ENCODE measurements at regions of chr9 and their contacts with region 1.

Region 1: DNA sequence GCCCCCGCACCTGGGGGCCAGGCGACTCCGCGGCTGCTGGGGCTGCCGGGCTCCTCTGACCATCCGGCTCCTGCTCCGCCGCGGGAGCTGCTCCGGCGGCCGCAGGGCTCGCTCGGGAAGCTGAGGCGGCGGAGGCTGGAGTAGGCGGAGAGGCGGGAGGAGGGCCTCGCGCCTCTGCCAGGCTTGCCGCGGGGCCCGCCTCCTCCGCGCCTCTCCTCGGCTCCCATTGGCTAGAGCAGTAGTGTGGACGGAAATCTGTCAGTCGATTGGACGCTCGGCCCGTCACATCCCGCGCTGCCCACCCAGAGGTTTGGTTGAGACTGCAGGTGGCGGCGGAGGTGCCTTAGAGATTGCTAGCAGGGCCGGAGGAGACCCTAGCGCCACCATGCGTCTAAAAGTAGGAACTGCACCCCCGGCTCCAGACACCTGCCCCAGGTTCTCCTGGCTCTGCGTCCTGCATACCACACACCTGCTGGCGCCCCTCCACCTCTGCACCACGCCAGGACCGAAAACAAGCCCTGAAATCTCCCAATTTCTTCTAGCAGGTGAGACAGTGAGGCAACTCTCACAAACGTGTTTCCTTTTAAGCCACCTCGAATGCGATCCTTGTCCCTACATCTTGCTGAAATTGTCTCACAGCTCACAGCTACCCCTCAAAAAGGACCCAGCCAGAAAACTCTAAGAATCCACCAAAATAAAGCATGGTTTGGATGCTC is at the start of gene SCAI:
- DNase-seq: peak; percentile 98 to 100 (median 100)
- H3K4me3 ChIP-seq: peak within 1 kb of the TSS; percentile 13 to 87 (median 66)
- H3K27ac ChIP-seq: peak within 1 kb of the TSS in 3 of 5 donors; percentile 41 to 80 (median 55)
- H3K4me1 ChIP-seq: peaks cover 0 to 22% of the 10 kb centered on the region in 2 donors
- H3K27me3 ChIP-seq: no peaks in the 10 kb centered on the region
- CTCF ChIP-seq: peak; percentile 98 to 100 (median 99)
- POLR2A ChIP-seq: peak; percentile 45 to 82
- total RNA-seq, gene SCAI: 7.8 to 19.6 (median 10.6) TPM

Region 2: GRCh38 chr9:124551472-124552272 is 591.9 kb before region 1 on chr9:
- intact Hi-C with region 1: no loop called
- DNase-seq: peak in 6 of 7 donors; percentile 49 to 73 (median 66)
- H3K4me3 ChIP-seq: no peak overlapping the region
- H3K27ac ChIP-seq: no peak overlapping the region
- H3K4me1 ChIP-seq: no peaks in the 10 kb centered on the region
- H3K27me3 ChIP-seq: no peaks in the 10 kb centered on the region
- CTCF ChIP-seq: peak; percentile 45 to 65 (median 59)
- POLR2A ChIP-seq: no peak

Region 3: GRCh38 chr9:124771021-124771866 is 372.3 kb before region 1 on chr9 and contains the start of gene NR6A1:
- intact Hi-C with region 1: no loop called
- DNase-seq: peak; percentile 97 to 98 (median 98)
- H3K4me3 ChIP-seq: peak within 1 kb of the TSS in 3 of 4 donors; percentile 13 to 81 (median 71)
- H3K27ac ChIP-seq: peak within 1 kb of the TSS in 4 of 5 donors; percentile 50 to 75 (median 67)
- H3K4me1 ChIP-seq: peaks cover 5 to 12% of the 10 kb centered on the region in 2 donors
- H3K27me3 ChIP-seq: peaks cover 24% of the 10 kb centered on the region
- CTCF ChIP-seq: peak in 3 of 6 experiments; percentile 18 to 30 (median 22)
- POLR2A ChIP-seq: peak in 1 of 2 donors; percentile 31
- total RNA-seq, gene NR6A1: 0.83 to 9.8 (median 1.6) TPM

Region 4: DNA sequence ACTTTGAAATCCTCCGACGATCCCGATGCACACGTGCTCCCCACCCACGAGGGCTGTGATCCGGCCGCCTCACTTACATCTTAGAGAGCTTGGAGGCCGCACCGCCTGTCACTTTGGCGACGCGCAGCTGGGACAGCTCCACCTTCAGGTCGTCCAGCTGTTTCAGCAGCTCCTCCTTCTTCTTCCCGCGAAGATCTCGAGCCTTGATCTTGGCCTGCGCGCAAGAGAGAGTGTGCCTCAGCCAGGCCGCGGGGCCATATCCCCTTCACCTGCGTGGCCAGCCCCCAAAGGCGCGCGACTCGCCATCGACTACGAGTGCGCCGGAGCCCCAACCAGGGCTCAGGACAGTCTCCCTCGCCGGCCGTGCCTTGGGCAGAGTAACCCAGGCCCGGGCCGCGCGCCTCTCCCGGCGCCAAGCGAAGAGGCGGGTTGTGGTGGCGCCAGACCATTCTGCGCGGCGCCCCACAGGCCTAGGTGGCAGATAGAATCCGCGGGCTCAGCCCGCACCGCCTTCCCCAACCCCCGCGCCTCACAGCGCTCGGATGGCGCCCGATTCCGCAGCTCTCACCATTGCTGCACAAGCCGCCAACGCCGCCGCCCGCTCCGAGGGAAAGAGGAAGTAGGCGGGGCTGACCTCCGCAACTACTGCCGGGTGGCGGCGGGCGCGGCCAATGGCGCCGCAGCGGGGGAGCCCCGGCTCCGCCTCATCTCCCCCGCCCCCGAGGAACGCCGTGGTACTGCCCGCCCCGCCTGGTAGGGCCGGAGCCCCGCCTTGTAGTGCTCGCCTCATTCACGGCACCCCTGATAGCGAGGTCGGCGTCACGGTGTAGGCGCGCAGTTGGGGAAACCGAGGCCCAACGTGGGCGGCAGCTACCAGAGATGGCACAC is 281.9 kb before region 1 on chr9 and contains the starts of genes ARPC5L and RPL35:
- intact Hi-C with region 1: loop called in 1 of 2 experiments (anchors 10 kb)
- DNase-seq: peak; percentile 94 to 97 (median 95)
- H3K4me3 ChIP-seq: peak within 1 kb of the TSS; percentile 37 to 94 (median 62)
- H3K27ac ChIP-seq: peak within 1 kb of the TSS; percentile 70 to 93 (median 92)
- H3K4me1 ChIP-seq: peaks cover 15 to 36% of the 10 kb centered on the region in 2 donors
- H3K27me3 ChIP-seq: no peaks in the 10 kb centered on the region
- CTCF ChIP-seq: peak in 5 of 6 experiments; percentile 14 to 45 (median 22)
- POLR2A ChIP-seq: peak; percentile 75 to 81
- total RNA-seq, gene ARPC5L: 20.7 to 86.8 (median 38.1) TPM
- total RNA-seq, gene RPL35: 884 to 2,087 (median 1,245) TPM

Region 5: GRCh38 chr9:124934290-124934689 is 209.2 kb before region 1 on chr9:
- intact Hi-C with region 1: loop called in 1 of 2 experiments (anchors 10 kb)
- DNase-seq: no peak
- H3K4me3 ChIP-seq: no peak overlapping the region
- H3K27ac ChIP-seq: no peak overlapping the region
- H3K4me1 ChIP-seq: peaks cover 0 to 2% of the 10 kb centered on the region in 2 donors
- H3K27me3 ChIP-seq: no peaks in the 10 kb centered on the region
- CTCF ChIP-seq: no peak
- POLR2A ChIP-seq: no peak